Activated CD4-positive, alpha-beta T cell treated with anti-CD3 and anti-CD28 coated beads, Interleukin-2, amount 10 ng/mL, durations not matched to agents 24 days and 14 days (primary cell): ENCODE measurements at regions of chr9 and their contacts with region 1.

Region 1: GRCh38 chr9:132406554-132407122 is at the start of gene TTF1:
- DNase-seq: peak; percentile 98
- H3K4me3 Mint-ChIP-seq: peak within 1 kb of the TSS; percentile 79
- H3K27ac Mint-ChIP-seq: peak within 1 kb of the TSS; percentile 92
- H3K4me1 Mint-ChIP-seq: peaks cover 52% of the 10 kb centered on the region
- H3K27me3 Mint-ChIP-seq: peaks cover 24% of the 10 kb centered on the region
- total RNA-seq, gene TTF1: 33.6 and 34.8 TPM in 2 replicates

Region 2: GRCh38 chr9:132354637-132355355 is 51.8 kb before region 1 on chr9 and contains the start of gene SETX:
- intact Hi-C with region 1: loop called (anchors 1 kb)
- DNase-seq: peak; percentile 97
- H3K4me3 Mint-ChIP-seq: peak within 1 kb of the TSS; percentile 74
- H3K27ac Mint-ChIP-seq: peak within 1 kb of the TSS; percentile 98
- H3K4me1 Mint-ChIP-seq: peaks cover 36% of the 10 kb centered on the region
- H3K27me3 Mint-ChIP-seq: peaks cover 2% of the 10 kb centered on the region
- total RNA-seq, gene SETX: 45.8 and 46.0 TPM in 2 replicates

Region 3: GRCh38 chr9:132443951-132444607 is 37.4 kb after region 1 on chr9:
- intact Hi-C with region 1: no loop called
- DNase-seq: no peak
- H3K4me3 Mint-ChIP-seq: no peak overlapping the region
- H3K27ac Mint-ChIP-seq: no peak overlapping the region
- H3K4me1 Mint-ChIP-seq: no peaks in the 10 kb centered on the region
- H3K27me3 Mint-ChIP-seq: peaks cover 21% of the 10 kb centered on the region

Region 4: DNA sequence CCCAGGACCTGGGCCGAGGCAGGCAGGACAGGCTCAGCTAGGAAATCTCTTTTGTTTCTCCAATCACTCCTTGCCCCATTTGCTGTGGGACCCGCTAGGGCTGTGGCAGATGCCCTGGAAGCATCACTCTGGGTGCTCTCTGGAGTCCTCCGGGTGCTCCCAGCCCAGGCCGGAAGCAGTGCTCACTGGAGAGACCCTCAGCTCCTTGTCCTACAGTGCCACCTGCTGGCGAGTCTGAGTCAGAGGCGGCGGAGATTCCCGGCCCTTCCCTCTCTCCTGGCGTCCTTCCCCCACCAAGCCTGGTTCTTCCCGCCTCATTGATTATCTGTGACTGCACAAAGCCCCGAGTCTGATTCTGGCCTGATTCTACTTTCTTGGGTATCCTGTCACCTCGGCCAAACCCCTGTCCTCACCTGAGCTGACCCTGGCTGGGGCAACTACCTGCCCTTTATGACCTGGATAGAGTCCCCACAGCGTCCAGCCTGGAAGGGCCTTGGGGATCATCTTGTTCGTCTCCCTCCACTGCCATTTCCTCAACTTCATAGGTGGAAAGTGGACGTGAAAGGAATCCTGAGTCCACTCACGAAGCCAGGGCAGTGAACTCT is 168.5 kb after region 1 on chr9:
- intact Hi-C with region 1: loop called (anchors 1 kb)
- DNase-seq: peak; percentile 84
- H3K4me3 Mint-ChIP-seq: no peak overlapping the region
- H3K27ac Mint-ChIP-seq: no peak overlapping the region
- H3K4me1 Mint-ChIP-seq: no peaks in the 10 kb centered on the region
- H3K27me3 Mint-ChIP-seq: peaks cover 46% of the 10 kb centered on the region

Region 5: GRCh38 chr9:132800038-132800648 is 393.5 kb after region 1 on chr9:
- intact Hi-C with region 1: loop called (anchors 1 kb)
- DNase-seq: peak; percentile 87
- H3K4me3 Mint-ChIP-seq: no peak overlapping the region
- H3K27ac Mint-ChIP-seq: no peak overlapping the region
- H3K4me1 Mint-ChIP-seq: peaks cover 4% of the 10 kb centered on the region
- H3K27me3 Mint-ChIP-seq: peaks cover 30% of the 10 kb centered on the region

Region 6: GRCh38 chr9:132973713-132974112 is 567.1 kb after region 1 on chr9:
- intact Hi-C with region 1: loop called (anchors 5 kb)
- DNase-seq: peak; percentile 65
- H3K4me3 Mint-ChIP-seq: no peak overlapping the region
- H3K27ac Mint-ChIP-seq: no peak overlapping the region
- H3K4me1 Mint-ChIP-seq: no peaks in the 10 kb centered on the region
- H3K27me3 Mint-ChIP-seq: peaks cover 24% of the 10 kb centered on the region